Activated T-helper 1 cell treated with anti-CD3 and anti-CD28 coated beads, Interleukin-12 subunit alpha, Interleukin-12 subunit beta, Interleukin-2, Interleukin-4 antibody, amounts not matched to agents 30 ng/mL and 10 ng/mL and 1 ng/mL, durations not matched to agents 14 hours and 24 hours and 36 hours (primary cell): ENCODE measurements at regions of chr1 and their contacts with region 1.

Region 1: GRCh38 chr1:152034646-152035405 is 2.0 kb downstream of the S100A11 start:
- DNase-seq: peak; percentile 65
- H3K4me3 Mint-ChIP-seq: peak overlapping the region; percentile 96
- H3K27ac Mint-ChIP-seq: peak overlapping the region; percentile 94
- H3K4me1 Mint-ChIP-seq: peaks cover 41% of the 10 kb centered on the region
- H3K27me3 Mint-ChIP-seq: no peaks in the 10 kb centered on the region

Region 2: GRCh38 chr1:151993654-151994496 is 41.0 kb before region 1 on chr1 and contains the start of gene S100A10:
- intact Hi-C with region 1: loop called (anchors 2 kb)
- DNase-seq: peak; percentile 77
- H3K4me3 Mint-ChIP-seq: peak within 1 kb of the TSS; percentile 98
- H3K27ac Mint-ChIP-seq: peak within 1 kb of the TSS; percentile 98
- H3K4me1 Mint-ChIP-seq: peaks cover 49% of the 10 kb centered on the region
- H3K27me3 Mint-ChIP-seq: peaks cover 1% of the 10 kb centered on the region
- total RNA-seq, gene S100A10: 105 and 106 TPM in 2 replicates